ENCODE measurements at regions of chr17 and their contacts with region 1.

Region 1: DNA sequence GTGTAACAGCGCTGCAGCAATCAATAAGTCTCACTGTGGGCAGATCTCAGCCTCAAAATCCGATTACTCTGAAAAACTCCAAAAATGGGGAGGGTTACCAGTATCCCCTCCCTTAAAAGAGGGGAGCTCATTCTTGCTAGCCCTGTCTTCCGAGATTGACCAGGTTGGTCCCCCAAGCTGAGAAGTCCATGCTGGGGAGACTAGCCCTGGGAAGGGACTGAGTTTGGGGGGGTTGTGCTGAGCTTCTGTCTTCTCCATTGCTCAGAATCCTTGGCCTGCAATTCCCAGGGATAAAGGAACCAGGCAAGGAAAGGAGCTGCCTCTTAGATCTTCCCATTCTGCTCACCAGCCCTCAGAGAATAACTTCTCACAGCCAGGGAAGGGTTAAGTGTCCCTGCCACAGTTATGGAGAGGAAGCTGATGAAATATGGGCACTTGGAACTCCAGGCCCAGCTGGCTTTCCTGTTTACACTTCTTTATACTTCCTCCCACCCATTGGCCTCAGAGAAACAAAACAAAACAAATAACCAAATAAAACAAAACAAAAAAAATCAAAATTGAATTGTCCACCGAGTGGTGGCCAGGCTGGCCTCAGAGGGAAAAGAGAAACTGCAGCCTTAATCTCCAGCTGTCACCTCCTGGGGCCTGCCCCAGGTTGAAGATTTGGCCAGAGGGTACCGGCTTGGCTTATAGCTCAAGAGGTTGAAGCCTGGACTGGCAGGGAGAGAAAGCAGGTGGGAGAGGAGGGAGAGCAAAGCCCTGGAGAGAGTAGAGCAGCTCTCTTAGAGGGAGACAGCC is 2.6 kb downstream of the HOXB3 start:
- DNase-seq: no peak

Region 2: DNA sequence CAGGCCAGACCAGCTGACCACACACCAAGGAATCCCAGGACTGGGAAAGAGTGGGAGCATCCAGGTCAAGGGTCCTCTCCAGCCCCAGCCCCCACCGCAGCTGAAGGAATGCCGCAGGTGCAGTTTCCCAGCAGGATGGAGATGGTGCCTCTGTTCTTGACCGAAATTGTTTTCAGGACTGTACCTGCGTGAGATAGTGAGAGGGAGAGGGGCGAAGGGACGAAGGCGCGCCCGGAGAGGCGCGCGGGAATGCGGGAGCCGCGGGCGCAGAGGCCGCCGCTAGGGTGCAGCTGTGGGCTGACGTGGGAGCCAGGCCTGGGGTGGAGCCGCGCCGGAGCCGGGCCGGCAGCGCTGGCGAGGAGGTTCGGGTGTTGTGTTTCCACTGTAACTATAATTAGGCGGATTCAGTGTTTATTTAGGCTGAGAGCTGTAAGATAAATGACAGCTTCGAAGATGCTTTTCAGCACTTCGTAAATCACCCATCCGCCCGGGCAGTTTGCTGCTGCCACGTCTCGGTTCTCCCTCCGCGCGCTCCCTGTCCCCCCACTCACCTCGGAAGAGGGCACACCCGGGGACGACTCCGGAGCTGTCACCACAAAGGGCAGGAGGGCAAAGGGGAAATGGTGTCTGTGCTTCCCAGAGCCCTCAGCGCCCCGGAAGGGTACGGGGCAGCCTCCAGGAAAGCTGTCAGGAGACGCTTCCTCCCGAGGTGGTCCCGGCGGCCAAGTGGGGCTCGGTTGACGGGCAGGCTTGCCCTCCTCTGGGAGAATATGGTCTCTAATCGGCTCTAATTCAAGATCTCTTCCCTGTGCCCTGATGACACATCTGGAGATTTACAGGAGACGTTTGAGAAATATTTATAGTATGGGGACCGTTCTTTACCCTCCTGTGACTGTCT is 94.8 kb before region 1 on chr17:
- intact Hi-C with region 1: loop called (anchors 2 kb)
- DNase-seq: peak; percentile 79

Measured in cardiac septum (tissue), 1 donor.